ENCODE measurements at regions of chr3 and their contacts with region 1.

Region 1: GRCh38 chr3:156554842-156555687 is at the start of gene SSR3:
- DNase-seq: peak; percentile 98 to 99 (median 98)
- ATAC-seq: peak; percentile 98
- H3K4me3 ChIP-seq: peak within 1 kb of the TSS; percentile 87 to 98
- H3K4me3 Mint-ChIP-seq: peak within 1 kb of the TSS; percentile 97
- H3K27ac ChIP-seq: peak within 1 kb of the TSS; percentile 76 to 89
- H3K27ac Mint-ChIP-seq: peak within 1 kb of the TSS; percentile 94
- H3K4me1 ChIP-seq: peaks cover 20% of the 10 kb centered on the region
- H3K4me1 Mint-ChIP-seq: peaks cover 49% of the 10 kb centered on the region
- H3K27me3 ChIP-seq: no peaks in the 10 kb centered on the region
- H3K27me3 Mint-ChIP-seq: no peaks in the 10 kb centered on the region
- CTCF ChIP-seq: peak; percentile 27
- total RNA-seq, gene SSR3: 81.4 to 82.5 TPM

Region 2: GRCh38 chr3:155854141-155854940 is 700.7 kb before region 1 on chr3 and contains the start of gene SLC33A1:
- CTCF ChIA-PET with region 1: no interaction called
- POLR2A ChIA-PET with region 1: no interaction called
- intact Hi-C with region 1: loop called (anchors 1 kb)
- DNase-seq: peak; percentile 96 to 100 (median 99)
- ATAC-seq: peak; percentile 89
- H3K4me3 ChIP-seq: peak within 1 kb of the TSS; percentile 85 to 92
- H3K4me3 Mint-ChIP-seq: peak within 1 kb of the TSS; percentile 98
- H3K27ac ChIP-seq: peak within 1 kb of the TSS; percentile 90 to 95
- H3K27ac Mint-ChIP-seq: peak within 1 kb of the TSS; percentile 99
- H3K4me1 ChIP-seq: peaks cover 33% of the 10 kb centered on the region
- H3K4me1 Mint-ChIP-seq: peaks cover 39% of the 10 kb centered on the region
- H3K27me3 ChIP-seq: no peaks in the 10 kb centered on the region
- H3K27me3 Mint-ChIP-seq: no peaks in the 10 kb centered on the region
- CTCF ChIP-seq: no peak
- total RNA-seq, gene SLC33A1: 12.6 to 12.9 TPM

Region 3: GRCh38 chr3:156525808-156526207 is 29.3 kb before region 1 on chr3:
- CTCF ChIA-PET with region 1: no interaction called
- POLR2A ChIA-PET with region 1: interaction called, 12 read pairs
- intact Hi-C with region 1: loop called in 1 of 2 experiments (anchors 2 kb)
- DNase-seq: no peak
- ATAC-seq: no peak
- H3K4me3 ChIP-seq: no peak overlapping the region
- H3K4me3 Mint-ChIP-seq: no peak overlapping the region
- H3K27ac ChIP-seq: no peak overlapping the region
- H3K27ac Mint-ChIP-seq: no peak overlapping the region
- H3K4me1 ChIP-seq: peaks cover 6% of the 10 kb centered on the region
- H3K4me1 Mint-ChIP-seq: peaks cover 8% of the 10 kb centered on the region
- H3K27me3 ChIP-seq: no peaks in the 10 kb centered on the region
- H3K27me3 Mint-ChIP-seq: peaks cover 15% of the 10 kb centered on the region
- CTCF ChIP-seq: no peak

Region 4: GRCh38 chr3:156648086-156648485 is 93.0 kb after region 1 on chr3:
- CTCF ChIA-PET with region 1: no interaction called
- POLR2A ChIA-PET with region 1: no interaction called
- intact Hi-C with region 1: no loop called
- DNase-seq: no peak
- ATAC-seq: no peak
- H3K4me3 ChIP-seq: no peak overlapping the region
- H3K4me3 Mint-ChIP-seq: no peak overlapping the region
- H3K27ac ChIP-seq: no peak overlapping the region
- H3K27ac Mint-ChIP-seq: no peak overlapping the region
- H3K4me1 ChIP-seq: peaks cover 13% of the 10 kb centered on the region
- H3K4me1 Mint-ChIP-seq: peaks cover 14% of the 10 kb centered on the region
- H3K27me3 ChIP-seq: no peaks in the 10 kb centered on the region
- H3K27me3 Mint-ChIP-seq: peaks cover under 1% of the 10 kb centered on the region
- CTCF ChIP-seq: no peak

Region 5: DNA sequence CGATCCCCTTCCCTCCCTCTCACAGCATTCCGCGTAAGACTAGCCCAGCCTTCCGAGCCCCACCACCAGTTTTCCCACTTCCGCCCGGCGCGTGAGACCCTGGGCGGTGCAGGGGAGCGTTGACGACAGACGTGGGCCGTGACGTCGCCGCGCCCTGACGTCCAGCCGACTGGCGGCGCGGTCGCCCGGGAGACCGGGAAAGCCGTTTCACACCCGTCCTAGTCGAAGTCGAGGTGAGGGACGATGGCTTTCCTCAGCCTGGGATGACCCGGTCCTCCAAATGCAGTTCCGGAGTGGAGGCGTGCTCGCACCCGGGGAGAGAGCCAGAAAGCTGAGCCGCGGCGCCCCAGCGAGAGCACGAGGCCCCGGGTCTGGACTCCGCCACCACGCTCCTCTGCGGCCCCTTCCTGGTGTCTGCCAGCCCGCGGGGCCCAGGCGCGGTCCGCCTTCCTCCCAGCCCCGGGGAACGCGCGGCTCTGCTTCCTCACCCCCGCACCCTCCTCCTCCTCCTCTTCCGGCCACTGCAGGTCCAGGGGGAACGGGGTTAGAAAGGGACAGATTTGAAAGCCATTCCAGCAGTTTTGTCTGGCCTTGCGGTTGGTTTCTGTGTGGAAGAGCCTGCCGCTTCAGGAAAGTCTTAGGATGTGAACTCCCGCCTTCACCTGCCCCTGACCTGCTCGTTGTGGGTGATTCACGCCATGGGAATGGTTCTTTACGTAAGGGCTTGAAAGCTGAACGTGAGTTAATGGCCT is 271.3 kb after region 1 on chr3 and contains the start of gene LEKR1:
- CTCF ChIA-PET with region 1: no interaction called
- POLR2A ChIA-PET with region 1: no interaction called
- intact Hi-C with region 1: loop called in 1 of 2 experiments (anchors 2 kb)
- DNase-seq: peak; percentile 28 to 92 (median 67)
- ATAC-seq: peak; percentile 54
- H3K4me3 ChIP-seq: peak within 1 kb of the TSS; percentile 71 to 81
- H3K4me3 Mint-ChIP-seq: peak within 1 kb of the TSS; percentile 89
- H3K27ac ChIP-seq: peak within 1 kb of the TSS; percentile 73 to 92
- H3K27ac Mint-ChIP-seq: peak within 1 kb of the TSS; percentile 95
- H3K4me1 ChIP-seq: peaks cover 9% of the 10 kb centered on the region
- H3K4me1 Mint-ChIP-seq: peaks cover 13% of the 10 kb centered on the region
- H3K27me3 ChIP-seq: no peaks in the 10 kb centered on the region
- H3K27me3 Mint-ChIP-seq: no peaks in the 10 kb centered on the region
- CTCF ChIP-seq: no peak
- total RNA-seq, gene LEKR1: 1.5 to 1.8 TPM

Region 6: DNA sequence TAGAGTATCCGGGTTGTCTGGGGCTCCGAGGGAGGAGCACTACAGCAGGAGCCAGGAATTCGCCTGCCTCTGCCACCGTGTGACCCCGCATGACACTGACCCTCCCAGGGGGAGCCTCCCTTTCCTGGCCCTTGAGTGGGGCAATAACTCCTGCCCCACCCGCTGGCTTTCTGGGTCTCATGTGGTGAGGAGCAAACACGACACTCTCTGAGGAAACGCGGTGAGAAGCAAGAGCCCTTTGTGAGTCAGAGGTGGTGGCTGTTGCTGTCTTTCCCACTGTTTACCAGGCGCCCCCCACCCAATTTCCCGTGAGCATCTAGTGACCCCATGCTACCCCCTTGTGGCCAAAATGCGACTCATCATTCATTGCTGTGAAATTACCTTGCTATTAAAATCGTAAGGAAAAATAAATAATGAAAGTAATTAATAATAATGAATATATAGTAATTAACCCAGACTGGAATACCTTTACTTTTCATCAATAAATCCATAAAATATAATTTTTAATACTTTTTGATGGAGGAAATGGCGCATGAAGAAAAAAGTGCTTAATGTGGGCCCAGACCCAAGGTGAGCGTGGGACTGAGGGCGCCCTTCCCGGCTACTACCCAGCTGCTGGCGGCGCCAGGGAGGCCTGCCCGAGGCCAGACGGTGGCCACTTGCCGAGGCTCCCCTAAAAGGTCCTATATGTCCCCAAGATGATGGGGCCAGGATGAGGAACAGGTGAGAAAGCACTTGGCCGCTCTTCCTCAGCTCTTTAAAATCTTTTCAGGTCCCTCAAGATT is 575.6 kb after region 1 on chr3:
- CTCF ChIA-PET with region 1: no interaction called
- POLR2A ChIA-PET with region 1: interaction called, 4 read pairs
- intact Hi-C with region 1: loop called in 1 of 2 experiments (anchors 1 kb)
- DNase-seq: peak; percentile 44 to 93 (median 85)
- ATAC-seq: peak; percentile 69
- H3K4me3 ChIP-seq: peak overlapping the region; percentile 14 to 24
- H3K4me3 Mint-ChIP-seq: peak overlapping the region; percentile 72
- H3K27ac ChIP-seq: peak overlapping the region; percentile 71 to 90
- H3K27ac Mint-ChIP-seq: peak overlapping the region; percentile 99
- H3K4me1 ChIP-seq: peaks cover 50% of the 10 kb centered on the region
- H3K4me1 Mint-ChIP-seq: peaks cover 71% of the 10 kb centered on the region
- H3K27me3 ChIP-seq: no peaks in the 10 kb centered on the region
- H3K27me3 Mint-ChIP-seq: no peaks in the 10 kb centered on the region
- CTCF ChIP-seq: peak; percentile 84

Region 7: DNA sequence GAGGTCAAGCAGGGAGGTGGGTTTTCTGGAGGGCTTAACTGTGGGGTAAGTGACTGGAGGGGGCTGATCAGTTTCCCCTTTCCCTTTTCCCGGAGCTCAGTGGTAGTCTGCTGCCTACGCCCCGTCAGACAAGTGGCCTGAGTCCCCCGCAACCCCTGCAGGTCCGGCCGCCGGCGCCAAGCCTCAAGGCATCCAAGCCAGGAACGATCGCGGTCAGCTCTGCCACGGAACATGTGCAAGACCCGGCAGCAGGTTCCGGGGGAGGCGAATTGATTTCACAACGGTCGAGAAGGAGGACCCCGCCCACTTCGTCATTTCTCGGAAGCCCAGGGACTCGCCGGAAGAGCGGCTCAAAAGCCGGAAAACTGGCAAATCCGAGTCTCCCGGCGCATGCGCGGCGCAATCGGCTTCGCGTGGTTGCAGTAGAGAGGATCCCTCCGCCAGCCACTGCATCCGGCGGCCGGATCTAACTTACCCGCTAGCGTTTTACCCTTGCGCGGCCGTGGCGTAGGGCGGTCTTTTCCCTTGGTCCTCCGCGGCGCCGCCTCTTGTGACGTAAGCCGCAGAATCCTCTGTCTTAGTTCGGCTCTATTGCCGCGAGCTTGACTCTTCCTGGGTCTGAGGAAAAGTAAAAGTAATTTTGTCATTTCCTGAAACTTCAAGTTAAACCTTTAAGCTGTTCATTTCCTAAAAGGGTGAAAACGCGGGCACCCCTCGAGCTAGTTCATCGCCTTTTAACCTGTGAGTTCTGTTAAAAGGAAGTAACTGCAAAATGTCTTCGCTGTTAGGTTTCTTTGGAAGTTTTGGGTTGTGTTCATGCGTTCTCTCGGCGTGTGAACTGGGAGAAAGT is 619.8 kb after region 1 on chr3:
- CTCF ChIA-PET with region 1: no interaction called
- POLR2A ChIA-PET with region 1: interaction called, 11 read pairs
- intact Hi-C with region 1: loop called (anchors 1 kb)
- DNase-seq: peak; percentile 94 to 100 (median 98)
- ATAC-seq: peak; percentile 91
- H3K4me3 ChIP-seq: peak overlapping the region; percentile 73 to 89
- H3K4me3 Mint-ChIP-seq: peak overlapping the region; percentile 92
- H3K27ac ChIP-seq: peak overlapping the region; percentile 96 to 98
- H3K27ac Mint-ChIP-seq: peak overlapping the region; percentile 99
- H3K4me1 ChIP-seq: peaks cover 25% of the 10 kb centered on the region
- H3K4me1 Mint-ChIP-seq: peaks cover 30% of the 10 kb centered on the region
- H3K27me3 ChIP-seq: no peaks in the 10 kb centered on the region
- H3K27me3 Mint-ChIP-seq: no peaks in the 10 kb centered on the region
- CTCF ChIP-seq: no peak